IMR-90 (cell line): ENCODE measurements at regions of chrX and their contacts with region 1.

Region 1: DNA sequence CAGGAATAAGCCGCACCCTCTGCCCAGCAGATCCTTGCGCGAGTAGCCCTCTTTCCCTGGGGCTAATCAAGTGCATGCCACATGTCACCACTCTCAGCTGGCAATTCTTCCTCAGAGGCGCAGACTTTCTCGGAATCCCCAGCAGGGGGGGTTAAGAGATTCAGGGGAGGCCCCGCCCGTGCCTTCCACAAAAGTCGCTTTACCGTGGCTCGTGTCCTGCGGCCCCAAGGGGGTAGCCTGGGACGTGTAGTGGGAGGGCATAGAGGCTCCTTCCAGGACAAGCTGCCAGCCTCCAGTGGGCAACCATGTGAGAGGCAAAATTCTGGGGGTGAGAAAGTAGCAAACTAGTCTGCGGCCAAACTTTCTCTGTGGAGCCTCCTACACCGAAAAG is 652 bp downstream of the SRPX start:
- DNase-seq: peak; percentile 52
- ATAC-seq: peak; percentile 65
- H3K4me3 ChIP-seq: peak overlapping the region; percentile 71
- H3K27ac ChIP-seq: peak overlapping the region; percentile 15
- H3K4me1 ChIP-seq: peaks cover 2% of the 10 kb centered on the region; the same call in 1 of the 2 replicates
- H3K27me3 ChIP-seq: no peaks in the 10 kb centered on the region
- CTCF ChIP-seq: peak; percentile 44
- POLR2A ChIP-seq: no peak
- RAD21 ChIP-seq: peak; percentile 27

Region 2: GRCh38 chrX:38260231-38260630 is 40.2 kb after region 1 on chrX:
- CTCF ChIA-PET with region 1: no interaction called
- POLR2A ChIA-PET with region 1: no interaction called
- dilution Hi-C with region 1: no loop called
- in situ Hi-C with region 1: no loop called
- intact Hi-C with region 1: loop called (anchors 5 kb)
- DNase-seq: peak; percentile 11
- ATAC-seq: no peak
- H3K4me3 ChIP-seq: no peak overlapping the region
- H3K27ac ChIP-seq: no peak overlapping the region
- H3K4me1 ChIP-seq: no peaks in the 10 kb centered on the region; the same call in 1 of the 2 replicates
- H3K27me3 ChIP-seq: no peaks in the 10 kb centered on the region
- CTCF ChIP-seq: peak; percentile 33
- POLR2A ChIP-seq: no peak
- RAD21 ChIP-seq: peak; percentile 27; the same call in 1 of the 2 replicates

Region 3: DNA sequence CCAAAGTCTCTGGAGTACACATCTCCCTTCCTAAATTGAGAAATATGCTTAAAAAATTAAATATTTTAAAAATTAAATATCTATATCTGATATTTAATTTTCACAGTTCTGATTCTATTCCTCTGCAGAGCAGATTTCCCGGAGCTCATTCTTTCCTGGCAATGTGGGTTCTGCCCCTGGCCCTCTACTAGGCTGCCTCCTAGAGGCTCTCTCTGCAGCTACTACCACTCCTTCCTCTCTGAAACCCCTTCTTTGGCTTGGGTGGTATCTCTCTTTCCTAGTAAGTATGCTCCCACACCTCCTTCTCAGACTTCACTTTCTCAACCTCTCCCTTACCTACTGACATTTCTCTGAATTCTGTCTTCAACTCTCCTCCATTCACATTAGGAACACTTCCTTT is 62.0 kb after region 1 on chrX:
- CTCF ChIA-PET with region 1: interaction called, 3 read pairs
- POLR2A ChIA-PET with region 1: no interaction called
- dilution Hi-C with region 1: no loop called
- in situ Hi-C with region 1: no loop called
- intact Hi-C with region 1: loop called (anchors 1 kb)
- DNase-seq: no peak
- ATAC-seq: peak; percentile 51; the same call in 1 of the 2 replicates
- H3K4me3 ChIP-seq: no peak overlapping the region
- H3K27ac ChIP-seq: no peak overlapping the region
- H3K4me1 ChIP-seq: peaks cover 3% of the 10 kb centered on the region
- H3K27me3 ChIP-seq: no peaks in the 10 kb centered on the region; the same call in 1 of the 2 replicates
- CTCF ChIP-seq: peak; percentile 51
- POLR2A ChIP-seq: no peak
- RAD21 ChIP-seq: peak; percentile 55